MCF 10A (cell line): ENCODE measurements at regions of chr3 and their contacts with region 1.

Region 1: DNA sequence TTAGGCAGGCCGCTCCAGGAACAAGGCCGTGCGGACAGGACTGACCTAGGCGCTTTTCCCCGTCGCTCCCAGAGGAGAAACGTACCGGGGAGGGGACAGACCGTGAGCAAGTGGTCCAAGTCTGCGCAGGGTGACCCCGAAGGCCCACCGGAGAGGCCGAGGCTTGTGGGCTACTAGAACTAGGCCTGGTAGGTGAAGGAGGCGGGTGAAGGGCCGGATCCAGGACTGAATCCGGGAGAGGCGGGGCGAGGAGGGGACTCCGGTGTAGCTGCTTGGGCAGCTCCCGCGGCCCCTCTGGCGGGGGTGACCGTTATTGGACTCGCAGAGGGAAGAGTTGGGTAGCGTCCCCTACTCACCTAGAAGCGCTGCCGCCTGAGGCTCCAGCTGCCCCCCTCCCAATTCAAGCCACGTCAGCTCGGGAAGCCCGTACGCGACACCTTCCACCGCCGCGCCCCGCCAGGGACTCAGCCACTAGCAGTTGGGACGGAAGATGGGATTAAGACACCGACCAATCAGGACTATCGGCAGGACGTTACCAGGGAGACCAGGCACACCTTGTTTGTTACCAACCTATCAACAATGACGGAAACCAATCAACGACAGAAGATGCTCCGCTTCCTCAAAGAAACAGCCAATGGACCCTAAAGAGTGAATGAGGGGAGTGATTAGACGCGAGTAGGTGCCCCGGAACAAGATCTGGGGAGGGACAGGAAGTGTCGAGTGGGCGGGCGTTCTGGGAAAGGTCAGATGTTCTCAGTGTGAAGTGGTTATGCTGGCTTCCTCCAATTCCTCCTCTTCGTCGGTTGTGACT is at the start of gene GOLGB1:
- DNase-seq: peak; percentile 100
- H3K4me3 Mint-ChIP-seq: no peak within 1 kb of the TSS
- H3K27ac Mint-ChIP-seq: no peak within 1 kb of the TSS
- H3K4me1 Mint-ChIP-seq: peaks cover 11% of the 10 kb centered on the region
- H3K27me3 Mint-ChIP-seq: peaks cover 18% of the 10 kb centered on the region
- CTCF ChIP-seq: no peak
- total RNA-seq, gene GOLGB1: 62.4 and 66.9 TPM in 2 replicates

Region 2: GRCh38 chr3:121660356-121661171 is 88.9 kb before region 1 on chr3 and contains the start of gene HCLS1:
- CTCF ChIA-PET with region 1: no interaction called
- POLR2A ChIA-PET with region 1: no interaction called
- intact Hi-C with region 1: no loop called
- DNase-seq: no peak
- H3K4me3 Mint-ChIP-seq: no peak within 1 kb of the TSS
- H3K27ac Mint-ChIP-seq: peak within 1 kb of the TSS; percentile 62
- H3K4me1 Mint-ChIP-seq: no peaks in the 10 kb centered on the region
- H3K27me3 Mint-ChIP-seq: no peaks in the 10 kb centered on the region
- CTCF ChIP-seq: no peak
- total RNA-seq, gene HCLS1: 1.6 and 2.5 TPM in 2 replicates

Region 3: GRCh38 chr3:121735047-121735696 is 14.3 kb before region 1 on chr3:
- CTCF ChIA-PET with region 1: interaction called, 3 read pairs
- POLR2A ChIA-PET with region 1: interaction called, 124 read pairs
- intact Hi-C with region 1: no loop called
- DNase-seq: no peak
- H3K4me3 Mint-ChIP-seq: no peak overlapping the region
- H3K27ac Mint-ChIP-seq: peak overlapping the region; percentile 5
- H3K4me1 Mint-ChIP-seq: peaks cover 30% of the 10 kb centered on the region
- H3K27me3 Mint-ChIP-seq: no peaks in the 10 kb centered on the region
- CTCF ChIP-seq: no peak

Region 4: DNA sequence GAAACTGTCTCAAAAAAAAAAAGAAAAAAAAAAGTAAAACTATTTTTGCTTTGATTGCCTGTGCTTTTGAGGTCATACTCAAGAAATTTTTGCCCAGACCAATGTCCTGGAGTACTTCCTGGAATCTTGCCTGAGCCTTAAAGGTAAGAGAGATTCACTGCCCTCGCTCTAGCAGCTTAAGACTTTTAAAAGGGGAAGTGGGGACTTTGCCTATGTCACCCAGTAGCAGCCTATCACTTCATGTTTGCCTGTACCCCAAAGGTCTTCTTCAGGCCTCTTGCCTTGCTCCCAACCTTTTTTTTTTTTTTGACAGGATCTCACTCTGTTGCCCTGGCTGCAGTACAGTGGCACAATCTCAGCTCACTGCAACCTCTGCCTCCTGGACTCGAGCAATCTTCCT is 19.0 kb after region 1 on chr3:
- CTCF ChIA-PET with region 1: no interaction called
- POLR2A ChIA-PET with region 1: interaction called, 10 read pairs
- intact Hi-C with region 1: no loop called
- DNase-seq: no peak
- H3K4me3 Mint-ChIP-seq: no peak overlapping the region
- H3K27ac Mint-ChIP-seq: no peak overlapping the region
- H3K4me1 Mint-ChIP-seq: no peaks in the 10 kb centered on the region
- H3K27me3 Mint-ChIP-seq: no peaks in the 10 kb centered on the region
- CTCF ChIP-seq: no peak

Region 5: DNA sequence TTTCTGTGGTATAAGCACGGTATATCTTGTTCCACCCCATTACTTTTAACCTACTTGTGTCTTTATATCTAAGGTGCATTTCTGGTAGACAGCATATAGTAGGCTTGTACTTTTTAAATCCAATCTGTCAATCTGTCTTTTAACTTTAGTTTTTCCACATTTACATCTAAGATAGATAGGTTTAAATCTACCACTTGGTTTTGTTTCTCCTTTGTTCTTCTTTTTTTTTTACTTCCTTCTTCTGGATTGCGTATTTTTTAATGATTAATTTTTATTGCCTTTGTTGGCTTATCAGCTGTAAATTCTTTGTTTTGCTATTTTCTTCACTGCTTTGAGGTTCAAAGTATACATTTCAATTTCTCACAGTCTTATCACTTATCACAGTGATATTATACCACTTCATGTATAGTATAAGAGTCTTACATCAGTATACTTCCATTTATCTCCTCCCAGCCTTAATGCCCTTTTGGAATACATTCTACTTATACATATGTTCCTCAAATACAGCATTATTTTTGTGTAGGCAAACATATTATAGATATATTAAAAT is 54.4 kb after region 1 on chr3:
- CTCF ChIA-PET with region 1: no interaction called
- POLR2A ChIA-PET with region 1: no interaction called
- intact Hi-C with region 1: no loop called
- DNase-seq: no peak
- H3K4me3 Mint-ChIP-seq: no peak overlapping the region
- H3K27ac Mint-ChIP-seq: no peak overlapping the region
- H3K4me1 Mint-ChIP-seq: no peaks in the 10 kb centered on the region
- H3K27me3 Mint-ChIP-seq: no peaks in the 10 kb centered on the region
- CTCF ChIP-seq: no peak